AG04450 (cell line): ENCODE measurements at regions of chr1 and their contacts with region 1.

Region 1: GRCh38 chr1:19715334-19716203 is 50.9 kb downstream of the HTR6 start:
- DNase-seq: peak; percentile 85
- H3K4me3 ChIP-seq: no peak overlapping the region
- H3K27ac ChIP-seq: no peak overlapping the region
- H3K27me3 ChIP-seq: no peaks in the 10 kb centered on the region
- CTCF ChIP-seq: peak; percentile 94

Region 2: GRCh38 chr1:19485362-19486187 is 230.0 kb before region 1 on chr1 and contains the start of gene CAPZB:
- CTCF ChIA-PET with region 1: interaction called, 10 read pairs
- POLR2A ChIA-PET with region 1: no interaction called
- DNase-seq: peak; percentile 49
- H3K4me3 ChIP-seq: peak within 1 kb of the TSS; percentile 94
- H3K27ac ChIP-seq: peak within 1 kb of the TSS; percentile 78
- H3K27me3 ChIP-seq: no peaks in the 10 kb centered on the region
- CTCF ChIP-seq: no peak
- polyA plus RNA-seq, gene CAPZB: 292 and 312 TPM in 2 replicates

Region 3: GRCh38 chr1:19728413-19729145 is 13.0 kb after region 1 on chr1:
- CTCF ChIA-PET with region 1: interaction called, 13 read pairs
- POLR2A ChIA-PET with region 1: no interaction called
- DNase-seq: no peak
- H3K4me3 ChIP-seq: no peak overlapping the region
- H3K27ac ChIP-seq: no peak overlapping the region
- H3K27me3 ChIP-seq: no peaks in the 10 kb centered on the region
- CTCF ChIP-seq: no peak

Region 4: GRCh38 chr1:19735440-19736127 is 20.0 kb after region 1 on chr1:
- CTCF ChIA-PET with region 1: interaction called, 13 read pairs
- POLR2A ChIA-PET with region 1: no interaction called
- DNase-seq: peak; percentile 83
- H3K4me3 ChIP-seq: no peak overlapping the region
- H3K27ac ChIP-seq: peak overlapping the region; percentile 57
- H3K27me3 ChIP-seq: no peaks in the 10 kb centered on the region
- CTCF ChIP-seq: no peak

Region 5: DNA sequence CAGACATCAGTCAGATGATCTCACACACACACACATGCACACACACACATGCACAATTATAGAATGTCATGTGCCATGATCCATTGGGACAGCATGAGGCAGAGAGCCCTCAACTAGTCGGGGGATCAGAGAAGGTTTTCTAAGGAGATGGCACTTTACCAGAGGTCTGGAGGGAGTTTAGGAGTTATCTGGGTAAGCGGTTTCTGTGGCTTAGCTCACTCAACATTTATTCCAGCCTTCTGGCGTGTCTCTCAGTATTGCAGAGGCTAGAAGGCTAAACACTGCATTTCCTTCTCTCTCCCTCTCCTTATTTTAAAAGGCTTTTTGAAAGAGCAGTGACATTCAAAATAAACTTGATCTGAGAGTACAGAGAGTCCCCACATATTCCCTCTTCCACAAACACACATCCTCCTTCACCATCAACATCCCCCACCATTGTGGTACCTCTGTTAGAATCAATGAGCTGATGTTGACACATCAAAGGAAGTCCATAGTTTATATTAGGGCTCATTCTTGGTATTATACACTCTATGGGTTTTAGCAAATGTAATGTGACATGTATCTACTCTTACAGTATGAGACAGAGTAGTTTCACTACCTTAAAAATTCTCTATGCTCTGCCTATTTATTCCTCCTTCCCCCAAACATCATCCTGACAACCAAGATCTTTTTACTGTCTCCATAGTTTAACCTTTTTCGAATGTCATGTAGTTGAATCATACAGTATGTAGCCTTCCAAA is 272.9 kb after region 1 on chr1:
- CTCF ChIA-PET with region 1: no interaction called
- POLR2A ChIA-PET with region 1: no interaction called
- DNase-seq: no peak
- H3K4me3 ChIP-seq: no peak overlapping the region
- H3K27ac ChIP-seq: no peak overlapping the region
- H3K27me3 ChIP-seq: peaks cover 9% of the 10 kb centered on the region
- CTCF ChIP-seq: no peak